CD4-positive, alpha-beta T cell (primary cell): ENCODE measurements at regions of chr22 and their contacts with region 1.

Region 1: GRCh38 chr22:37658133-37659065 is at the start of gene PDXP:
- DNase-seq: peak; percentile 96 to 99 (median 99)
- ATAC-seq: peak; percentile 94
- H3K4me3 ChIP-seq: peak within 1 kb of the TSS; percentile 65
- H3K4me3 Mint-ChIP-seq: peak within 1 kb of the TSS; percentile 91
- H3K27ac ChIP-seq: peak within 1 kb of the TSS; percentile 48 to 78
- H3K27ac Mint-ChIP-seq: peak within 1 kb of the TSS; percentile 91
- H3K4me1 ChIP-seq: peaks cover 35% of the 10 kb centered on the region
- H3K4me1 Mint-ChIP-seq: peaks cover 44% of the 10 kb centered on the region
- H3K27me3 ChIP-seq: no peaks in the 10 kb centered on the region
- H3K27me3 Mint-ChIP-seq: no peaks in the 10 kb centered on the region
- CTCF ChIP-seq: no peak
- total RNA-seq, gene PDXP: 1.5 TPM

Region 2: DNA sequence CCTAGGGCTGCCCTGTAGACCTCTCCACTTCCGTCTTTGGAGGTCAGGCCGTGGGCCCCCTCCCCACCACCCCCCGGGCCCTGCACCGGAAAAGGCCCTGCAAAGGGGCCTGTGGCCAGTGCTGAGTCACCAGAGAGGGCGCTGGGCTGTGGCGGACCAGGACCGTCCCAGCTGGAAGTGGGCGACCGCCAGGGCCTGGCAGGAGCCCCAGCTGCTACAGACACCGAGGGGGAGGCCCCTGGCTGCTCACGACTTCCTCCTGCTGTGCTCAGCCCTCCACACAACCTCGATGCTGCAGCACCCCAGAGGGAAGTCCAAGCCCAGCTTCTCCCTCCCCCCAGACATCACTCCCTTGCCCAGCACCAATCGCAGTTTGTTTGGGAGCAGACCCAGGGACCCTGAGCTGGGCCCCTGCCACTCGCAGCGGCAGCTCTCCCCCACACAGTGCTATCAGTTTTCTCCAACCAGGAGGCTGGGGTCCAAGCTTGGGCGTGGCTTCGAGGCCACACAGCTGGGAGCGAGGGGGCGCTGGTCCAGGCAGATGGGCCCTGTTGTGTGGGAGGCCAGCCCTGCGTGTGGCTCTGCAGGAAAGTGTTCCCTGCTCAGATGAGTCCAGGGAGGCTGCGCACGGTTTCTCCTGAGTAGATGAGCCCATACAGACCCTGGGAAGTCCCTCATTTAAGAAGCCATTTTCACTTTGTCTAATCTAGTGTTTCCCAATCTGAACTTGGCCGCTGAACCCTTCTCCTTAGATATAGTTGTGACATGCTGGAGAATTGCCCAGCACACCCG is 24.6 kb before region 1 on chr22:
- CTCF ChIA-PET with region 1: interaction called, 6 read pairs
- POLR2A ChIA-PET with region 1: interaction called, 103 read pairs
- intact Hi-C with region 1: no loop called
- DNase-seq: peak in 11 of 14 experiments; percentile 44 to 81 (median 52)
- ATAC-seq: peak; percentile 61
- H3K4me3 ChIP-seq: peak overlapping the region; percentile 34
- H3K4me3 Mint-ChIP-seq: peak overlapping the region; percentile 88
- H3K27ac ChIP-seq: peak overlapping the region; percentile 65 to 86
- H3K27ac Mint-ChIP-seq: peak overlapping the region; percentile 94
- H3K4me1 ChIP-seq: peaks cover 85% of the 10 kb centered on the region
- H3K4me1 Mint-ChIP-seq: peaks cover 68% of the 10 kb centered on the region
- H3K27me3 ChIP-seq: no peaks in the 10 kb centered on the region
- H3K27me3 Mint-ChIP-seq: no peaks in the 10 kb centered on the region
- CTCF ChIP-seq: no peak

Region 3: DNA sequence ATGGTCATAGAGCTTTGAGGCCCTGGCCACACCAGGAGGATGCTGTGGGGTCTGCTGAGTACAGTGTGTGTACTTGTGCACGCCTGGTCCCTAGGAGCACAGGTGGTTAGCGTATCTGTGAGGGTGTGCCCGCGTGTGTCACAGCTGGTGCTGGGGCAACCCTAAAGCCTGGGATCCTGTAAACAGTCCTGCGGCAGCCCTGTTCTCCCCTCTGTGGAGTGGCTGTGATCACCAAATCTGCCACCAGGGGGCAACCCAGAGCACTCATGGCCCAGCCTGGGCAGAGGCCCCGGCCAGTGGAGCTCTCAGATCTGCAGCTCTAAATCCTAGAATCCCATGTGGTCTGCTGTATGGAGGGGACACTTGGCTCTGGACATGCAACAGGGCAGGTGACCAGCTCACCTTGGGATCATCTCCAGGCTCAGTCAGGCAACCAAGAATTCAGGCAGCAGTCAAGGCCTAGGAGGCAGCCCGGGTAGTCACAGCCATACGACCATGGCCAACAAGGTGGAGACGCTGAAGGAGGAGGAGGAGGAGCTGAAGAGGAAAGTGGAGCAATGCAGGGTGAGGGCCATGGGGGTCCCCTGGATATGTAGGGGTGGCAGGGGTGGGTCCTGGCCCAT is 15.1 kb before region 1 on chr22:
- CTCF ChIA-PET with region 1: interaction called, 33 read pairs
- POLR2A ChIA-PET with region 1: interaction called, 103 read pairs
- intact Hi-C with region 1: loop called (anchors 2 kb)
- DNase-seq: peak; percentile 73 to 94 (median 87)
- ATAC-seq: peak; percentile 68
- H3K4me3 ChIP-seq: no peak overlapping the region
- H3K4me3 Mint-ChIP-seq: peak overlapping the region; percentile 85
- H3K27ac ChIP-seq: no peak overlapping the region
- H3K27ac Mint-ChIP-seq: peak overlapping the region; percentile 80
- H3K4me1 ChIP-seq: peaks cover 65% of the 10 kb centered on the region
- H3K4me1 Mint-ChIP-seq: peaks cover 35% of the 10 kb centered on the region
- H3K27me3 ChIP-seq: no peaks in the 10 kb centered on the region
- H3K27me3 Mint-ChIP-seq: no peaks in the 10 kb centered on the region
- CTCF ChIP-seq: peak; percentile 91

Region 4: DNA sequence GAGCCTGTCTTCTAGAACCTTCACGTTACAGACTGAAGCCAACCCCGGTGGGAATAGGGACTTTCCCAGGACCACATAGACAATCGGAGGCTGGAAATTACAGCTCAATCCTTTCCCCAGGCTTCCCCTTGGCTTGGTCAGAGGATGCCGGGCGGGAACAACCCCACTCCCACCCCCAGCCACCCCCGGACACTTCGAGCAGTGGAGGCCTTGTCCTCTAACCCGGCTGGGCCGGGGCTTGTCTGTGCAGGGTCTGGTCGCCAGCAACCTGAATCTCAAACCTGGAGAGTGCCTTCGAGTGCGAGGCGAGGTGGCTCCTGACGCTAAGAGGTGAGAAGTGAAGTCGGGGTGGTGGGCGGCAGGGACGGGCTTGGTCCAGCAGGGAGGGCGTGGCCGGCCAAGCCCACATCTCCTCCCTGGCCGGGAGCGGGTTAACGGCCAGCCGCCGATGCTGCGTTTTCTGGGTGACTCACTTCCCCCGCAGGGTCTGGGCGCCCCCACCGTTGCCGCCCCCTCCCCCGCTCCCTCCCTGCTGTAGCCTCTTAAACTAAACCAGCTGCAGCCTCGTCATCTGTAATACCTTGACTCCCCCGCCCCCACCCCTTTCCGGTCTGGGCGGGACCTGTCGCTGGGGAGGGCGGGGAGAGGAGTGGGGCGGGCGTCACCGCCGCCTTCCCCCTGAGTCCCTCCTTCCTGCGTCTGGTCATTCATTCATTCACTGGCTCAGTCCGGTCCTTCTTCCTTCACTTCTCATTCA is 18.5 kb after region 1 on chr22:
- CTCF ChIA-PET with region 1: interaction called, 63 read pairs
- POLR2A ChIA-PET with region 1: interaction called, 256 read pairs
- intact Hi-C with region 1: loop called (anchors 1 kb)
- DNase-seq: peak; percentile 90 to 97 (median 94)
- ATAC-seq: peak; percentile 83
- H3K4me3 ChIP-seq: peak overlapping the region; percentile 88
- H3K4me3 Mint-ChIP-seq: peak overlapping the region; percentile 89
- H3K27ac ChIP-seq: peak overlapping the region; percentile 91 to 99
- H3K27ac Mint-ChIP-seq: peak overlapping the region; percentile 96
- H3K4me1 ChIP-seq: peaks cover 72% of the 10 kb centered on the region
- H3K4me1 Mint-ChIP-seq: peaks cover 58% of the 10 kb centered on the region
- H3K27me3 ChIP-seq: no peaks in the 10 kb centered on the region
- H3K27me3 Mint-ChIP-seq: no peaks in the 10 kb centered on the region
- CTCF ChIP-seq: no peak

Region 5: DNA sequence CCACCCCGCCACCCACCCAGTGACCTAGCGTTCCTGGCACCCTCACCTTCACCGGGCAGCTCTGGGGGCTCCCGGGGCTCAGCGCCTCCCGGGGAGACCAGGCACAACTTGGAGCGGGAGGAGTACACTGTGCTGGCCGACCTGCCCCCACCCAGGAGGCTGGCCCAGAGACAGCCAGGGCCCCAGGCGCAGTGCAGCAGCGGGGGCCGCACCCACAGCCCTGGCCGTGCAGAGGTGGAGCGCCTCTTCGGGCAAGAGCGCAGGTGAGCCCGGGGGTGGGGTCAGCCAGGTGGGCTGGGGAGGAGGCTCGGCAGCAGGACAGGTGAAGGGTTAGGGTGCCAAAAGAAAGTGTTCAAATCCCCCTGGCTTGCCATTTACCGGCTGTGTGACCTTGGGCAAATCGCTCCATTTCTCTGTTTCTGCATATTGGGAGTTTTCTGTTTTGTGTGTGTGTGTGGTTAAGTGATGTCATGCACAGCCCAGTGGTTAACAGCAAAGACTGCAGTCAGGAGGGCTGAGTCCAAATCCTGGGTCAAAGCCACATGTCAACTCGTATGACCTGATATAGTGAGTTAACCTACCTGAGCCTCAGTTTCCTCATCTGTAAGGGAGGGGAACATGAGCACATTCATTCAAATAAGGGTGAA is 68.0 kb after region 1 on chr22:
- CTCF ChIA-PET with region 1: no interaction called
- POLR2A ChIA-PET with region 1: no interaction called
- intact Hi-C with region 1: no loop called
- DNase-seq: no peak
- ATAC-seq: no peak
- H3K4me3 ChIP-seq: no peak overlapping the region
- H3K4me3 Mint-ChIP-seq: no peak overlapping the region
- H3K27ac ChIP-seq: no peak overlapping the region
- H3K27ac Mint-ChIP-seq: no peak overlapping the region
- H3K4me1 ChIP-seq: no peaks in the 10 kb centered on the region
- H3K4me1 Mint-ChIP-seq: no peaks in the 10 kb centered on the region
- H3K27me3 ChIP-seq: no peaks in the 10 kb centered on the region
- H3K27me3 Mint-ChIP-seq: no peaks in the 10 kb centered on the region
- CTCF ChIP-seq: no peak